Activated T-helper 2 cell treated with anti-CD3 and anti-CD28 coated beads, Interferon-gamma antibody, Interleukin-2, Interleukin-4, amounts not matched to agents 10 μg/mL and 5 μg/mL and 100 μg/mL, durations not matched to agents 14 hours and 24 hours and 36 hours (primary cell): ENCODE measurements at regions of chr2 and their contacts with region 1.

Region 1: DNA sequence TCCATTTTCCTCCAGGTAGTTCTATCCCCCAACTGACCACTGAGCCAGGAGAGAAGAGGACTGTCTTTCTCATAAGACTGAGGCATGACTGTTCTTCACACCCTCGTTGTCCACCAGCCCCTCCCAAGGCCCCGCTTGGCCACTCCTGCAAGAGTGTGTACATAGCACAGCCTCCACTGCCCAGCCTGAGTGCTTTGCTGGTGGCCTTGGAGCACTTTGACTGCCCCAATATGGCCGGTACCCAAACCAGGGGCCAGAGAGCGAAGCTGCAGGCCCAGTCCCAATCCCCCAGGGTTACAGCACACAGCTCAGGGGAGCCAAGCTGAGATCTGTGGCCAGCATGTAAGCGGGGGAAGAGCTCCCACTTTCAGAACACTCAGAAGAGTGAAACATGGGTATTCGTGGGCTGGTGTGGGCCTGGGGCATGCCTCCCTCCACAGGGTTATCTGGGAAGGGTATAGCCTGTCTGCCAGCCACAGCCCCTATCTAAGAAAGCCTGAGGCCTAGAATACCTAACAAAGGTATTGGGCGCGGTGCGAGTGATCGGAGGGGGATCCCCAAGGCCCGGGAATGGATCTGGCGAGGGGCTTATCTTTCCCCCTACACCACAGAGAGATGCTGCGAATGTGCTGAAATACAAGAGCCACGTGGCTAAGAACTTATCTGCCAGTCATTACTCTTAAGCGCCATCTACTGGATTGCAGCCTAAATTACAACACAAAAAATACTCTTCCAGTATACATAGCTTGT is 163.8 kb downstream of the WDPCP start:
- DNase-seq: no peak
- H3K4me3 Mint-ChIP-seq: no peak overlapping the region
- H3K27ac Mint-ChIP-seq: no peak overlapping the region
- H3K4me1 Mint-ChIP-seq: peaks cover 2% of the 10 kb centered on the region
- H3K27me3 Mint-ChIP-seq: no peaks in the 10 kb centered on the region

Region 2: GRCh38 chr2:62787386-62787785 is 637.1 kb before region 1 on chr2:
- intact Hi-C with region 1: loop called (anchors 5 kb)
- DNase-seq: no peak
- H3K4me3 Mint-ChIP-seq: no peak overlapping the region
- H3K27ac Mint-ChIP-seq: no peak overlapping the region
- H3K4me1 Mint-ChIP-seq: peaks cover 11% of the 10 kb centered on the region
- H3K27me3 Mint-ChIP-seq: no peaks in the 10 kb centered on the region

Region 3: DNA sequence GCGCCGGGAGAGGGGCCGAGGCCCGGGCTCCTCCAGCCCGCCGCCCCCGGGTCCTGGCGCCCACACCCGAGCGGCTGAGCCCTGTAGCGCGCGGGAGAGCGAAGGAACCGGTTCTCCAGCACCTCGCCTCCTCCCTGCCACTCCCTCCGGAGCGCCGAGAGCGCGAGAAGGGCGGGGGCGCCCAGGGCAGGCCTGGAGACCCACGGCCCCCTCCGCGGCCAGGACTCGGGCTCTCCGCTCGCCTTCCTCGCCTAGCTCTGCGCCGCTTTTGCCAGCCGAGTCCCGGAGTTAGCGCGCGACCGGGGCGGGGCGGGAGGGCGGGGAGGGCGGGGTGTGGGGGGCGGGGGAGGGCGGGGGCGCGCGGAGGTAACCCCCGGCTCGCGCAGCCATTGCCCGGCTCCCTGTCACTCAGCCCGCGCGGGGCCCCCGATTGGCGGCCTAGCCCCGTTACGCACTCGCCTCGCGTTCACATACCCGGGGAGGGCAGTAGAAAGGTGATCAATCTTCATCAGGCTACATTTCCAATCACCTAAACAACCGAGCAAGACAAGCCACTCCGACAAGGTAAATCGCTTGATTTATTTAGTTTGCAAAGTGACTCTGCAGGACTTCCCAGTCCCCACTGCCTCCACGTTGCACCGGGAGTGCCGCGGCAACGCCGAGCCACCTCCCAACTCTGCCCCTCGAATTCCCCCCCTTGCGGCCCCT is 374.0 kb before region 1 on chr2 and contains the start of gene OTX1:
- intact Hi-C with region 1: loop called (anchors 10 kb)
- DNase-seq: no peak
- H3K4me3 Mint-ChIP-seq: peak within 1 kb of the TSS; percentile 80
- H3K27ac Mint-ChIP-seq: peak within 1 kb of the TSS; percentile 45
- H3K4me1 Mint-ChIP-seq: peaks cover 23% of the 10 kb centered on the region
- H3K27me3 Mint-ChIP-seq: peaks cover 81% of the 10 kb centered on the region
- total RNA-seq, gene OTX1: not detected in 2 replicates